Ascending aorta (tissue), 2 donors: ENCODE measurements at regions of chr11 and their contacts with region 1.

Region 1: GRCh38 chr11:61947486-61948210 is 2.5 kb upstream of the BEST1 start:
- DNase-seq: peak; percentile 69 to 96
- H3K4me3 ChIP-seq: no peak overlapping the region
- H3K27ac ChIP-seq: peak overlapping the region in 1 of 2 donors; percentile 39
- H3K4me1 ChIP-seq: peaks cover 3 to 11% of the 10 kb centered on the region in 2 donors
- H3K27me3 ChIP-seq: no peaks in the 10 kb centered on the region
- CTCF ChIP-seq: peak; percentile 91 to 94 (median 94)

Region 2: DNA sequence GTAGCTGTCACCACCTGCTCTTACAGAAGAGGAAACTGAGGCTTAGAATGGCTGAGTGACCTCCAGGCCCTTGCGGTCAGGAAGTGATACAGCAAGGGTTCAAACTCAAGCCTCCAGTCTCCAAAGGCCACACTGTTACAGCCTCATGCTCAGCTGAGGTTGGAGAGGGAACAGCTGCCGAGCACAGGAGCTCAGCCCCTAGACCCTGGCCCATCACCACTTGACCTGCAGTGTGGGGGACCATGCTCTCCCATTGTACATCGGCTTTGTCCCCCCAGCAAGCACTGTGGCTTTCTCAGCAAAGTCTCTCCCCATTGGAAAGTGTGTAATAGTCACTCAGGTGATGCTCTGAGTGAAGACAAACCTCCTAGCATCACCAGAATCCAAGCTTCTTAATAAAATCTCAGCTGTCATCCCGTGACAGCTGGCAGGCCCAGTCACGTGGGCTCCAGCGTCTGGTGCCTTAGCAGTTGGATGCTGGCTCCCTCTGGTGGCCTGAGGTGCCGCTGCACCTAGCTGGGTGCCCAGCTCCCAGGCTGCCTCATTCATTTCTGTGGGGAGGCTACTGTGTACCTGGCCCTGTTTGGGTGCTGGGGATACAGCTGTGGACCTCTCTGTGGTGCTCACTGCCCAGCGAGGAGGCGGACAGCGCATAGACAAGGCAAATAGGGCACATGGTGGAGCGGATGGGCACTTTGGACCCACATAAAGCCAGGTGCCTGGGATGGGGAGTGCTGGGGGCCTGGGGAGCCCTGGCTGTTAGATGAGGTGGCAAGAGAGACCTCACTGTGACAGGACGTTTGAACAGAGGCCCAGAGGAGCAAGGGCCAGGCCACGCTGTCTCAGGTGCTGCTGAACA is 214.3 kb before region 1 on chr11:
- intact Hi-C with region 1: no loop called
- DNase-seq: peak; percentile 47 to 88
- H3K4me3 ChIP-seq: no peak overlapping the region
- H3K27ac ChIP-seq: peak overlapping the region; percentile 53 to 74
- H3K4me1 ChIP-seq: peaks cover 0 to 6% of the 10 kb centered on the region in 2 donors
- H3K27me3 ChIP-seq: no peaks in the 10 kb centered on the region
- CTCF ChIP-seq: peak; percentile 96 to 99 (median 98)

Region 3: DNA sequence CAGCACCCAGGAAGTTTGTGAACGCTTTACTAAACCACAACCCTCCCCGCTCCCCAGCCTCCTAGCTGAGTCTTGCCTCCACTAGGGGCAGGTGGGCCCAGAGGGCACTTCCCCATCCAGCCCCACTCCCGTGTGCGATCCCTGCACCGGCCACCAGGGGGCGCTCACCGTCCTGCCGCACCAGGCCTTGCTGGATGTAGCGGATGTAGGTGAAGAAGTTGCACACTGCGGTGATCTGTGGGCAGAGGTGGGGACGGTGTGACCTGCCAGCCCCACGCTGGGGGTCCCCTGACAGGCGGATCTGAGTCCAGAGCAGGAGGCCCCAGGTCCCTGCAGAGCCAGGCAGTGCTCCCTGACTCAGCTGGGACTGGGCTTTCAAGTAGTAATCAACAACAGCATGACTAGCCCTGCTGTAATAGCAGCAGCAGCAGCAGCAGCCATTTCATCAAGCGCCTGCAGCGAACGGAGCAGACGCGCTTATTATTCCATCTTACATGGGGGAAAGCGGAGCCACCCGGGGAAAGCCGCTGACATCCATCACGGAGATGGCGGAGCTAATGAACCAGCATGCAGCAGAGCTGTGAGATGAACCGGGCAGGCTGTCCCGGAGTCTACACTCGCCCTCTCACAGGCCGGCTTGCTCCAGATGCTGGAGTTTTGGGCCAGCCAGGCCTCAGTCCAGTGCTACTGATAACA is 48.4 kb before region 1 on chr11:
- intact Hi-C with region 1: loop called (anchors 1 kb)
- DNase-seq: peak in 1 of 2 donors; percentile 91
- H3K4me3 ChIP-seq: no peak overlapping the region
- H3K27ac ChIP-seq: peak overlapping the region in 1 of 2 donors; percentile 30
- H3K4me1 ChIP-seq: no peaks in the 10 kb centered on the region
- H3K27me3 ChIP-seq: no peaks in the 10 kb centered on the region
- CTCF ChIP-seq: peak; percentile 99 to 100 (median 99)

Region 4: GRCh38 chr11:61917341-61918109 is 30.1 kb before region 1 on chr11 and contains the start of gene RAB3IL1:
- intact Hi-C with region 1: loop called (anchors 2 kb)
- DNase-seq: peak in 1 of 2 donors; percentile 81
- H3K4me3 ChIP-seq: peak within 1 kb of the TSS; percentile 67 to 90
- H3K27ac ChIP-seq: peak within 1 kb of the TSS; percentile 39 to 54
- H3K4me1 ChIP-seq: peaks cover 3 to 8% of the 10 kb centered on the region in 2 donors
- H3K27me3 ChIP-seq: no peaks in the 10 kb centered on the region
- CTCF ChIP-seq: no peak
- total RNA-seq, gene RAB3IL1: 23.2 TPM

Region 5: DNA sequence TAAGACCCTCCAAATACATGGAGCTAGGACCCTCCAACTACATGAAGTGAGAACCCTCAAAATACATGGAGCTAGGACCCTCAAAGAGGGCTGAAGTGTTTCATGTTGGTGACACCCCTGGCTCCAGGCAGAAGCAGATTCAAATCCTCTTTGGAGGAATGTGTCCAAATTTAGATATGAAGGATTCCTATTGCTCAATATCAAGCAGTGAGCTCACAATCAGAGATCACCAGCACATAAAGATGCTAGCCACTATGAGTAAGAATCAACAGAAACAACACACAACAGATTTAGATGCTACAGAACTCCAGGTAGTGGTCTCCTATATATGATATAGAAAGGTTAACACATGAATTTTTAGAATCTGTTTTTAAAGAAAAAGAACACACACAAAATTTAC is 19.0 kb before region 1 on chr11:
- intact Hi-C with region 1: no loop called
- DNase-seq: no peak
- H3K4me3 ChIP-seq: no peak overlapping the region
- H3K27ac ChIP-seq: no peak overlapping the region
- H3K4me1 ChIP-seq: no peaks in the 10 kb centered on the region
- H3K27me3 ChIP-seq: no peaks in the 10 kb centered on the region
- CTCF ChIP-seq: no peak

Region 6: GRCh38 chr11:62081378-62082291 is 134.0 kb after region 1 on chr11:
- intact Hi-C with region 1: loop called (anchors 1 kb)
- DNase-seq: peak; percentile 21 to 89
- H3K4me3 ChIP-seq: peak overlapping the region in 1 of 2 donors; percentile 5
- H3K27ac ChIP-seq: no peak overlapping the region
- H3K4me1 ChIP-seq: no peaks in the 10 kb centered on the region
- H3K27me3 ChIP-seq: no peaks in the 10 kb centered on the region
- CTCF ChIP-seq: peak; percentile 90 to 94 (median 93)